Breast epithelium (tissue), 4 donors: ENCODE measurements at regions of chr20 and their contacts with region 1.

Region 1: GRCh38 chr20:48398506-48399505 is 429.0 kb downstream of the PREX1 start:
- DNase-seq: no peak
- H3K4me3 ChIP-seq: no peak overlapping the region
- H3K27ac ChIP-seq: no peak overlapping the region
- H3K4me1 ChIP-seq: no peaks in the 10 kb centered on the region
- H3K27me3 ChIP-seq: peaks cover 0 to 9% of the 10 kb centered on the region in 2 donors
- CTCF ChIP-seq: no peak
- POLR2A ChIP-seq: no peak

Region 2: DNA sequence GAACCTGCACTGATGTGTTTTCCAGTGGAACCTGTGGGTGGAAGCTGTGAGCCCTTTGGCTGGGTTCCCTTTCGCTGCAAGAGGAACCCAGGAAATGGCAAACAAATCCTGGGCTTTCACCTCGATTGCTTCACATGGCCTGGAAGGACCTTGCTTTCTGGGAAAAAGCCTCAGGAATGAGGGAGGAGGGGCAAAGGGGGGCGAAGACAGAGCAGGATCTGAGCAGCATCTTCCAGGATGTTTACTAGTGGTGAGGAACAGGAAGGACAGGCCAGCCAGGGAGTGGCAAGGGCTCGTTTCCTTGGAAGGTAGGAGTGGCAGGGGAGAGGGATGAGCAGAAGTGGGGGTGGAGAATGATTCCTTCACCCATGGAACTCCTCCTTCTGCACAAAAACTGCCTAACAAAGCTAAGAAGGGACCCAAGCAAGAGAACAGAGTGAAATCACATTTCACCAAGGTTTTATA is 1683.5 kb before region 1 on chr20:
- intact Hi-C with region 1: loop called (anchors 5 kb)
- DNase-seq: peak; percentile 79 to 85
- H3K4me3 ChIP-seq: no peak overlapping the region
- H3K27ac ChIP-seq: peak overlapping the region; percentile 64 to 78
- H3K4me1 ChIP-seq: peaks cover 3 to 5% of the 10 kb centered on the region in 2 donors
- H3K27me3 ChIP-seq: no peaks in the 10 kb centered on the region
- CTCF ChIP-seq: peak; percentile 54 to 66 (median 55)
- POLR2A ChIP-seq: no peak

Region 3: DNA sequence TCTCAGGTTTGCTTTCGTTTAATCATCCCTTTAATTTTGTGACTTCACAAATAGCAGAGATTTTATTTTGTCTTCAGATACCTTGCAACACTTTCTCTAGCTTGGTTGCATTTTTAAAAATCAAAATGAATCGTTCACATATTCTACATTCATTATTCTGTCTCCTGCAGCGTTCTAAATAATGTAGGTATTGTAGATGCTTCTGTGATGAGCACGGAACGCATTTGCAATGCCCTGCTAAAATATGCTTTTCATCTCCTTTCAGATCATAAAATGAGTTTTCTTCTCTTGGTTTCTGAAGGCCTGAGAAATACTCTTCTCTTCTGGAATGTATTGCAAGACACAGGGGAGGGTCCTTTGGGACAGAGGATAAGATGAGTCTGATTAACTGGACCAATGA is 38.3 kb after region 1 on chr20:
- intact Hi-C with region 1: no loop called
- DNase-seq: no peak
- H3K4me3 ChIP-seq: no peak overlapping the region
- H3K27ac ChIP-seq: no peak overlapping the region
- H3K4me1 ChIP-seq: no peaks in the 10 kb centered on the region
- H3K27me3 ChIP-seq: no peaks in the 10 kb centered on the region
- CTCF ChIP-seq: no peak
- POLR2A ChIP-seq: no peak